Ovary (tissue), 10 donors: ENCODE measurements at regions of chr3 and their contacts with region 1.

Region 1: GRCh38 chr3:126995926-126996512 is 13.1 kb downstream of the PLXNA1 start:
- DNase-seq: no peak
- H3K4me3 ChIP-seq: no peak overlapping the region
- H3K27ac ChIP-seq: no peak overlapping the region
- H3K4me1 ChIP-seq: peaks cover 8% of the 10 kb centered on the region
- H3K27me3 ChIP-seq: no peaks in the 10 kb centered on the region
- CTCF ChIP-seq: no peak
- EP300 ChIP-seq: no peak
- POLR2A ChIP-seq: no peak

Region 2: DNA sequence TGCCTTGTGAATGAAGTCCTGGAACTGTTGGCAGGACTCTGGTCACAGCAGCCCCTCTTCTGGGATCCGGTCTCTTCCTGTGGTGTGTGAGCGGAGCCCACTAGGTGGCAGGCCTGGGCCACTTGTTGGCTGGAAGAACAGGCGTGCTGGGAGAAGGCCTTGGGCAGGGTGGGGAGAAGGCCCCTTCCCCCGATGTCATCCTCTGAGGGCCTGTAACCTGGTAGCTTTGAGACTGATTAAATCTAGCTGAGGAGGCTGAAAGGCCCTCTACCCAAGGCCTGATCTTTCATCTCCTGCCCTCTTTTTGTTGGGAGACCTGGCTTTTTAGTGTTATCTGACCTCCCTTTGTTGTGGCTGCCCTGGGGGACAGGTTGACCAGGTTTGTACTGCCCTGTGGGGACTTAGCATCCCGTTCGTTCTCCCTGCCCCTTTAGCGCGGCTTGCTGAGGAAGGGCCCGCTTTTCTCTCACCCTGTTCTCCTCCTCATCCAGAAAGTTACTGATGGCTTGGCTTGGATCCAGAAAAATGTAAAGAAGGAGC is 243.6 kb before region 1 on chr3:
- intact Hi-C with region 1: loop called in 1 of 4 experiments (anchors 5 kb)
- DNase-seq: peak; percentile 73 to 87 (median 81)
- H3K4me3 ChIP-seq: no peak overlapping the region
- H3K27ac ChIP-seq: no peak overlapping the region
- H3K4me1 ChIP-seq: no peaks in the 10 kb centered on the region
- H3K27me3 ChIP-seq: no peaks in the 10 kb centered on the region
- CTCF ChIP-seq: peak; percentile 54 to 78 (median 78)
- EP300 ChIP-seq: no peak
- POLR2A ChIP-seq: no peak